ENCODE measurements at regions of chr6 and their contacts with region 1.

Region 1: DNA sequence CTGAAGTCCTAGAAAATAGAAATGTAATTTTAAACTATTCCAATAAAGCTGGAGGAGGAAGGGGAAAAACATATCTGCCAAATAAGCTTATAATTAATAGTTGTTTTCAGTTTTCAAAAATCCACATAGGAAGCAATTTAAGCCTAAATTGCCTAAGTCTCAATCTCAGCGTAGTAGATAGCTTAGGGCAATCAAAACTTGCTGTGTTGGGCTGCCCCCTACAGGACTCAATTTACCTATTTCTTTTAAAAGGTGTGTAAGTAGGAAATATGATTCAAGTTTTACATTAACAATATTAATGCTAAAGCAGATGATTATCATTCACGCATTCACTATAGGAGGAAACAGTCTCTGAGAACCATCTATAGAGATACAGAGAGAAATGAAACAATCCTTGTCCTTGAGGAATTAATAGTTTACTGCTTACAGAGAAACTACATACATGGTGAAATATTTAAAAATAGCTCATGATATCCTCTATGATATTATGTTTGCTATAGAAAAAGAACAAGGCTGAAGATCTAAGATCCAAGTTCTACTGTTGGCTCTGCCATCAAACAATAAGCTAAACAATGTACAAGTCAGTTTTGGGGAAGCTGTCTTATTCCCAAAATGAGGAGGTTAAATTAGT is 102.1 kb downstream of the ATG5 start:
- DNase-seq: peak; percentile 81
- ATAC-seq: peak; percentile 49
- H3K4me3 ChIP-seq: no peak overlapping the region
- H3K4me3 Mint-ChIP-seq: no peak overlapping the region
- H3K27ac ChIP-seq: no peak overlapping the region
- H3K27ac Mint-ChIP-seq: no peak overlapping the region
- H3K4me1 ChIP-seq: no peaks in the 10 kb centered on the region
- H3K4me1 Mint-ChIP-seq: peaks cover 4% of the 10 kb centered on the region
- H3K27me3 ChIP-seq: no peaks in the 10 kb centered on the region
- H3K27me3 Mint-ChIP-seq: no peaks in the 10 kb centered on the region
- CTCF ChIP-seq: peak; percentile 92

Region 2: DNA sequence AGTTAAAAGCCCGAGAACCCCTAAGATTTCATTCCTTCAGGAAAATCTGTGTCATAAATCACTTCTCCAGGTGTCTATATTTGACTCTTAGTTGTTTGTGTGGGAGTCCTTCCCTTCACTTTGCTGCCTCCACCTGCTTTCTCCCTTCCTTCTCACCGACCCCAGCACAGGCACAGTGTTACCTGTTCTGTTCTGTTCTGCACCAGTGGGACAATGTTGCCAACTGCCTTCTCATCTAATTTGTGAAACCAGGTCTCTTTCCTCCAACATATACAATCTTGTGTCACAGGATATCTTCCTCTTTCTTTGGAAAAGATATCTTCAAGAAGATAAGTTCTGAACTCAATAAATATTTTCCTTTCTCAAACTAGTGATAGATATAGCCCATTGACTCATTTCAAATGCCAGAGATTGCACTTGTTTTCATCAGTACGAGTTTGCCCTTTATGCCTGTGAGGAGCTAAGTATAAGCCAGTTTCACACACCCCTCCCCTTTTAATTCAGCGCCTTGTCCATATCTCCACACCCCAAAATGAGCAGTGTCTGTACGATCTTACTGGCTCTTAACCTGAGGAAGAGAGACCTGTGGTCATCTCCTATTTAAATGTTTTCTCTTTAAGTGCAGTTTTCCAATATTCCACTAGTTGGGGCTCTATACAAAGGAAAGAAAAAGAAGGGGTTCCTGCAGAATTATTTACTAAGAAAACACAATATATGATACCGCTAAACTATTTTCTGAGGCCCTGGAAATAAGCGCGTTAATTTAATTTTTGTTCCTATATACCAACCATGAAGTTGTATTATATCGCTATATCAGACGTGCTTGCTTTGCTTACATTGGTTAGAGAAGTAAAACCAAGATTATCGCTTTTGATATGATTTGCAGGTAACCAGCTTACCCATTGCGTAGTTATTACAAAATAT is 738.9 kb before region 1 on chr6:
- CTCF ChIA-PET with region 1: interaction called, 8 read pairs
- POLR2A ChIA-PET with region 1: no interaction called
- intact Hi-C with region 1: loop called (anchors 1 kb)
- DNase-seq: peak; percentile 43
- ATAC-seq: peak; percentile 28
- H3K4me3 ChIP-seq: no peak overlapping the region
- H3K4me3 Mint-ChIP-seq: no peak overlapping the region
- H3K27ac ChIP-seq: no peak overlapping the region
- H3K27ac Mint-ChIP-seq: no peak overlapping the region
- H3K4me1 ChIP-seq: no peaks in the 10 kb centered on the region
- H3K4me1 Mint-ChIP-seq: peaks cover 5% of the 10 kb centered on the region
- H3K27me3 ChIP-seq: no peaks in the 10 kb centered on the region
- H3K27me3 Mint-ChIP-seq: peaks cover 11% of the 10 kb centered on the region
- CTCF ChIP-seq: peak; percentile 80

Region 3: GRCh38 chr6:105733565-105734162 is 489.8 kb before region 1 on chr6:
- CTCF ChIA-PET with region 1: interaction called, 73 read pairs
- POLR2A ChIA-PET with region 1: no interaction called
- intact Hi-C with region 1: no loop called
- DNase-seq: peak; percentile 50
- ATAC-seq: no peak
- H3K4me3 ChIP-seq: no peak overlapping the region
- H3K4me3 Mint-ChIP-seq: no peak overlapping the region
- H3K27ac ChIP-seq: no peak overlapping the region
- H3K27ac Mint-ChIP-seq: no peak overlapping the region
- H3K4me1 ChIP-seq: no peaks in the 10 kb centered on the region
- H3K4me1 Mint-ChIP-seq: no peaks in the 10 kb centered on the region
- H3K27me3 ChIP-seq: no peaks in the 10 kb centered on the region
- H3K27me3 Mint-ChIP-seq: no peaks in the 10 kb centered on the region
- CTCF ChIP-seq: peak; percentile 76

Region 4: GRCh38 chr6:105835373-105835772 is 388.0 kb before region 1 on chr6:
- CTCF ChIA-PET with region 1: interaction called, 10 read pairs
- POLR2A ChIA-PET with region 1: no interaction called
- intact Hi-C with region 1: no loop called
- DNase-seq: peak; percentile 52
- ATAC-seq: peak; percentile 45
- H3K4me3 ChIP-seq: peak overlapping the region in 1 of 5 experiments; percentile 1
- H3K4me3 Mint-ChIP-seq: no peak overlapping the region
- H3K27ac ChIP-seq: no peak overlapping the region
- H3K27ac Mint-ChIP-seq: no peak overlapping the region
- H3K4me1 ChIP-seq: peaks cover 20% of the 10 kb centered on the region in 2 donors
- H3K4me1 Mint-ChIP-seq: peaks cover 28% of the 10 kb centered on the region
- H3K27me3 ChIP-seq: no peaks in the 10 kb centered on the region
- H3K27me3 Mint-ChIP-seq: peaks cover 3% of the 10 kb centered on the region
- CTCF ChIP-seq: peak; percentile 28

Region 5: GRCh38 chr6:106085984-106086813 is 137.2 kb before region 1 on chr6 and contains the start of gene PRDM1:
- CTCF ChIA-PET with region 1: interaction called, 63 read pairs
- POLR2A ChIA-PET with region 1: interaction called, 3 read pairs
- intact Hi-C with region 1: loop called (anchors 1 kb)
- DNase-seq: peak; percentile 96
- ATAC-seq: peak; percentile 89
- H3K4me3 ChIP-seq: peak within 1 kb of the TSS; percentile 27 to 76 (median 60)
- H3K4me3 Mint-ChIP-seq: peak within 1 kb of the TSS; percentile 90
- H3K27ac ChIP-seq: peak within 1 kb of the TSS; percentile 1 to 67
- H3K27ac Mint-ChIP-seq: peak within 1 kb of the TSS; percentile 70
- H3K4me1 ChIP-seq: peaks cover 39 to 46% of the 10 kb centered on the region in 2 donors
- H3K4me1 Mint-ChIP-seq: peaks cover 47% of the 10 kb centered on the region
- H3K27me3 ChIP-seq: peaks cover 0 to 8% (median 2%) of the 10 kb centered on the region in 4 experiments
- H3K27me3 Mint-ChIP-seq: peaks cover 6% of the 10 kb centered on the region
- CTCF ChIP-seq: peak; percentile 35
- total RNA-seq, gene PRDM1: 6.9 and 8.5 TPM in 2 replicates

Region 6: GRCh38 chr6:106163446-106163965 is 59.9 kb before region 1 on chr6:
- CTCF ChIA-PET with region 1: interaction called, 12 read pairs
- POLR2A ChIA-PET with region 1: no interaction called
- intact Hi-C with region 1: no loop called
- DNase-seq: peak; percentile 68
- ATAC-seq: peak; percentile 66
- H3K4me3 ChIP-seq: peak overlapping the region in 4 of 5 experiments; percentile 21 to 48 (median 23)
- H3K4me3 Mint-ChIP-seq: peak overlapping the region; percentile 70
- H3K27ac ChIP-seq: peak overlapping the region; percentile 96 to 98
- H3K27ac Mint-ChIP-seq: peak overlapping the region; percentile 88
- H3K4me1 ChIP-seq: peaks cover 22 to 32% of the 10 kb centered on the region in 2 donors
- H3K4me1 Mint-ChIP-seq: peaks cover 31% of the 10 kb centered on the region
- H3K27me3 ChIP-seq: no peaks in the 10 kb centered on the region
- H3K27me3 Mint-ChIP-seq: no peaks in the 10 kb centered on the region
- CTCF ChIP-seq: peak; percentile 9

Region 7: DNA sequence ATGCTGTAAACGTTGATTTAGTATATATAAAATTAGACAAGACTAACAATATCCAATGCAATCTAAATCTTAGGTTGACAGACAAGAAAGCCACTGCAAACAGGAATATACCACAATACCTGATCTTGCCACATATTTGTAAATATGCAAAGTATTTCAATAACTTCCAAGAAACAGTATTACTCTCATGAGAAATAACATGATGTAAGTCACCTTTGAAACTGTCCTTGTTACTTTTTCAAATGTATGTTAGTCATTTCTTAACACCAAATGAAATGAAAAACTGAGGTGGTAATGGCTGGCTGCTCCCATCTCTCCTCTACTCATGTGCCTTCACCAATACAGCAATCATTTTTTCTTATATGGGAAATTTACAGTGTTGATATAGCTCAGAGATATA is 16.5 kb before region 1 on chr6:
- CTCF ChIA-PET with region 1: interaction called, 41 read pairs
- POLR2A ChIA-PET with region 1: no interaction called
- intact Hi-C with region 1: no loop called
- DNase-seq: no peak
- ATAC-seq: no peak
- H3K4me3 ChIP-seq: no peak overlapping the region
- H3K4me3 Mint-ChIP-seq: no peak overlapping the region
- H3K27ac ChIP-seq: no peak overlapping the region
- H3K27ac Mint-ChIP-seq: no peak overlapping the region
- H3K4me1 ChIP-seq: no peaks in the 10 kb centered on the region
- H3K4me1 Mint-ChIP-seq: no peaks in the 10 kb centered on the region
- H3K27me3 ChIP-seq: no peaks in the 10 kb centered on the region
- H3K27me3 Mint-ChIP-seq: no peaks in the 10 kb centered on the region
- CTCF ChIP-seq: no peak

Region 8: DNA sequence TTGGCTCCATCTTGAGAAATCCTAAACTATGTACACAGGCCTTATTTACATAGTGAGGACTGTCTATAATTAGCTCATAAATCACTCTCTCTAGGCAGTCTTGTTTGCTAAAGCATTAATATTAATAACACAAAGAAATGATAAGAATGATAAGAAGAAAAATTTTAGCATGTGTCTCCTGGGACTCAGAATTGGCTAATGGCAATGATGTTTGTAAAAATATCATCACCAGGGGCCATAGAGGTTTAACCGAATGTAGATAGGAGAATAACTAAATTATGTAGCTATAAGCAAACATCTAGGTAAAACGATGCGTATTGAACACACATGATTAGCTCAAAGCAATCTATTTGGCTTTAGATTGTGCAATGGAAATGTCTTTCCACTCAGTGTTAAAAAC is 123.9 kb after region 1 on chr6:
- CTCF ChIA-PET with region 1: no interaction called
- POLR2A ChIA-PET with region 1: no interaction called
- intact Hi-C with region 1: no loop called
- DNase-seq: no peak
- ATAC-seq: no peak
- H3K4me3 ChIP-seq: no peak overlapping the region
- H3K4me3 Mint-ChIP-seq: no peak overlapping the region
- H3K27ac ChIP-seq: no peak overlapping the region
- H3K27ac Mint-ChIP-seq: no peak overlapping the region
- H3K4me1 ChIP-seq: no peaks in the 10 kb centered on the region
- H3K4me1 Mint-ChIP-seq: no peaks in the 10 kb centered on the region
- H3K27me3 ChIP-seq: peaks cover 0 to 4% (median 0%) of the 10 kb centered on the region in 4 experiments
- H3K27me3 Mint-ChIP-seq: peaks cover 16% of the 10 kb centered on the region
- CTCF ChIP-seq: no peak